CD8-positive, alpha-beta T cell (primary cell): ENCODE measurements at regions of chr3 and their contacts with region 1.

Region 1: DNA sequence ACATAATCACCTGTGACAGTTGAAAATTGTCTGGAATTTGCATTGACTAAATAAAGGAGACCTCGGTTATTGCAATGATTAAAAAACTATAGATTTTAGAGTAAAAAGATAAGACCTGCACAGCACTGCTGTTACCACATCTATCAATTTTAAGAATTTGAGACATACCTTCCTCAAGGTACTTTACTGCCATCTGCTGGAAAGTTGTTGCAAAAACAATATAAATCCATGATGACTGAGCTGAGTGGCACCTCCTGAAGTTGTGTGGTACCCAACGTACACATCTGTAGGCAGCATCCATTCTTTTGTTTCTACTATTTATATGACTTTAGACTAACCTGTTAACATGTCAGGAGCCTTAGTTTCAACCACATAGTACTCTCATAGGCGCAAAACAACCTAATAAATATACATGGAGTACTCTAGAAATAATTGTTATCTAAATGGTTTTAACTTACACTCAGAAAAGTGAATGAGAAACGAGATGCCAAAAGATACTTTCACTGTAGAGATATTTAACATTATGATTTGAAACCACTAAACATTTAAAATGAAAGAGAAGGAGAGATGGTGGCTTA is 106.7 kb downstream of the GHSR start:
- DNase-seq: peak in 3 of 9 experiments; percentile 15 to 73 (median 63)
- ATAC-seq: peak; percentile 75
- H3K4me3 ChIP-seq: no peak overlapping the region
- H3K4me3 Mint-ChIP-seq: no peak overlapping the region
- H3K27ac ChIP-seq: no peak overlapping the region
- H3K27ac Mint-ChIP-seq: no peak overlapping the region
- H3K4me1 ChIP-seq: no peaks in the 10 kb centered on the region
- H3K4me1 Mint-ChIP-seq: no peaks in the 10 kb centered on the region
- H3K27me3 ChIP-seq: no peaks in the 10 kb centered on the region
- H3K27me3 Mint-ChIP-seq: no peaks in the 10 kb centered on the region
- CTCF ChIP-seq: peak; percentile 74

Region 2: GRCh38 chr3:170961616-170962400 is 1379.8 kb before region 1 on chr3:
- CTCF ChIA-PET with region 1: interaction called, 3 read pairs
- POLR2A ChIA-PET with region 1: no interaction called
- intact Hi-C with region 1: loop called in 1 of 2 experiments (anchors 2 kb)
- DNase-seq: peak in 2 of 9 experiments; percentile 18 to 40
- ATAC-seq: no peak
- H3K4me3 ChIP-seq: no peak overlapping the region
- H3K4me3 Mint-ChIP-seq: no peak overlapping the region
- H3K27ac ChIP-seq: no peak overlapping the region
- H3K27ac Mint-ChIP-seq: no peak overlapping the region
- H3K4me1 ChIP-seq: no peaks in the 10 kb centered on the region
- H3K4me1 Mint-ChIP-seq: no peaks in the 10 kb centered on the region
- H3K27me3 ChIP-seq: peaks cover 0 to 2% of the 10 kb centered on the region in 2 experiments
- H3K27me3 Mint-ChIP-seq: no peaks in the 10 kb centered on the region
- CTCF ChIP-seq: peak; percentile 72

Region 3: DNA sequence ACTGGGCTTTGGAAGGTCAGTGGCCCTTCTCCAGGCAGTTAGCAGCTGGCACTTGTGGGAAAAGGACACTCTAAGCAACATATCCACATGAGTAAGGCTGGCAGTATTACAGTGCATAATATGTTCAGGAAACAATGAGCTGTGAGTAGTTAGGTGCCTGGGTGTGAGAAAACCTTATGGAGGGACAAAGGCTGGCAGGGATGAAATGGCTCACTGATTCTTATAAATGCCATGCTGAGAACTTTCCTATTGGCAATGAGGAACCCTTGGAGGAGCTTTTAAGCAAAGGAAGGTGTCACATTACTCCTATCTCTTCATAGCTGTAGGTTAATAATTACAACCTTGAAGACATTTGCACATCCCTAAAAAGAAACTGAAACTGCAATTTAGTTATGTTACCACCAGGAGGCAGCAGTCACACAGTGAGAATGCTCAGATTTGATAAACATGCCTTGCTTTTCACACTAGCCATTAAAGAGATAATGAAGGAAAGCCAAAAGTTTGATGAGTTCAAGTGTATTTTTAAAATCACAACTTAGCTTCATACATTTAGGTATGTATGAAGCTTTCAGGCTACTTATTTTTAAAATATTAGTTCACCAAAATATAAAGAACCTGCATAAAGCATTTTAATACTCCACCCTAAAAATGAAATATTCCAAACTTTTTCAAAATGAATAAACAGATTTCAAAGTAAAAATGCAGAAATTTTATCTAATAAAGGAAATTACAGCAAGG is 1178.4 kb before region 1 on chr3:
- CTCF ChIA-PET with region 1: no interaction called
- POLR2A ChIA-PET with region 1: no interaction called
- intact Hi-C with region 1: loop called in 1 of 2 experiments (anchors 5 kb)
- DNase-seq: peak in 3 of 9 experiments; percentile 9 to 58 (median 42)
- ATAC-seq: peak; percentile 34
- H3K4me3 ChIP-seq: no peak overlapping the region
- H3K4me3 Mint-ChIP-seq: no peak overlapping the region
- H3K27ac ChIP-seq: no peak overlapping the region
- H3K27ac Mint-ChIP-seq: no peak overlapping the region
- H3K4me1 ChIP-seq: no peaks in the 10 kb centered on the region
- H3K4me1 Mint-ChIP-seq: peaks cover 18% of the 10 kb centered on the region
- H3K27me3 ChIP-seq: no peaks in the 10 kb centered on the region
- H3K27me3 Mint-ChIP-seq: no peaks in the 10 kb centered on the region
- CTCF ChIP-seq: peak; percentile 77

Region 4: DNA sequence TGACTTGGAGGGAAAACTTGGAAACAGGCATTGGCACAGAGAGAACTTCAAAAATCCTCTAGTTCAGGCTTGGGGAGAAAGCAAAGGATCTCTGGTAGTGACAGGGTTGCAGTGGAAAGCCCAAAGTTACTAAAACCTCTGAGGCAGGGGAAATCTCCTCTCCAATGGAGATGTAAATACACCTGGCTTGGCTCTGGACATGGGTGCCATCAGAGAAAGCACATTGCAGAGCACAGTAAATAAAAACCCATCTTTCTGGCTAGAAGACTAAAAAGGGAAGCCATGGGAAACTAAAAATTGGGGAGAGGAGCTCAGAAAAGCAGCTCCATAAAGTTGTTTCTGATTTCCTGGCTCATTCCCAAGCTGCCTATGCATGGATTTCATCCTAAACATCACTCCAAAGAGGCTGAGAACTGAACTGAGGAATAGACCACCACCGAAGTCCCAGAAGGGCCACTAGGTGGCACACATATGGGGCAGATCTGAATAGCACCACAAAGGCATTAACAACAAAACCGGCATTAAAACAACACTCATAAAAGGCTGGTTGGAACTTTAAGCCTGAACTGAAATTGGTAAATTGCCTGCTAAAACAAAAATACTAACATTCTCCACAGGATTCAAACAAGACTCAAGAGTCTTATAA is 637.7 kb before region 1 on chr3:
- CTCF ChIA-PET with region 1: interaction called, 3 read pairs
- POLR2A ChIA-PET with region 1: no interaction called
- intact Hi-C with region 1: loop called in 1 of 2 experiments (anchors 5 kb)
- DNase-seq: peak in 3 of 9 experiments; percentile 5 to 42 (median 42)
- ATAC-seq: no peak
- H3K4me3 ChIP-seq: no peak overlapping the region
- H3K4me3 Mint-ChIP-seq: no peak overlapping the region
- H3K27ac ChIP-seq: no peak overlapping the region
- H3K27ac Mint-ChIP-seq: no peak overlapping the region
- H3K4me1 ChIP-seq: no peaks in the 10 kb centered on the region
- H3K4me1 Mint-ChIP-seq: no peaks in the 10 kb centered on the region
- H3K27me3 ChIP-seq: no peaks in the 10 kb centered on the region
- H3K27me3 Mint-ChIP-seq: peaks cover 9% of the 10 kb centered on the region
- CTCF ChIP-seq: no peak

Region 5: GRCh38 chr3:171829841-171830517 is 511.6 kb before region 1 on chr3:
- CTCF ChIA-PET with region 1: interaction called, 4 read pairs
- POLR2A ChIA-PET with region 1: no interaction called
- intact Hi-C with region 1: loop called in 1 of 2 experiments (anchors 10 kb)
- DNase-seq: peak in 2 of 9 experiments; percentile 15 to 18
- ATAC-seq: no peak
- H3K4me3 ChIP-seq: no peak overlapping the region
- H3K4me3 Mint-ChIP-seq: no peak overlapping the region
- H3K27ac ChIP-seq: no peak overlapping the region
- H3K27ac Mint-ChIP-seq: no peak overlapping the region
- H3K4me1 ChIP-seq: no peaks in the 10 kb centered on the region
- H3K4me1 Mint-ChIP-seq: peaks cover 2% of the 10 kb centered on the region
- H3K27me3 ChIP-seq: no peaks in the 10 kb centered on the region
- H3K27me3 Mint-ChIP-seq: peaks cover 11% of the 10 kb centered on the region
- CTCF ChIP-seq: no peak